ENCODE measurements at regions of chr1 and their contacts with region 1.

Region 1: DNA sequence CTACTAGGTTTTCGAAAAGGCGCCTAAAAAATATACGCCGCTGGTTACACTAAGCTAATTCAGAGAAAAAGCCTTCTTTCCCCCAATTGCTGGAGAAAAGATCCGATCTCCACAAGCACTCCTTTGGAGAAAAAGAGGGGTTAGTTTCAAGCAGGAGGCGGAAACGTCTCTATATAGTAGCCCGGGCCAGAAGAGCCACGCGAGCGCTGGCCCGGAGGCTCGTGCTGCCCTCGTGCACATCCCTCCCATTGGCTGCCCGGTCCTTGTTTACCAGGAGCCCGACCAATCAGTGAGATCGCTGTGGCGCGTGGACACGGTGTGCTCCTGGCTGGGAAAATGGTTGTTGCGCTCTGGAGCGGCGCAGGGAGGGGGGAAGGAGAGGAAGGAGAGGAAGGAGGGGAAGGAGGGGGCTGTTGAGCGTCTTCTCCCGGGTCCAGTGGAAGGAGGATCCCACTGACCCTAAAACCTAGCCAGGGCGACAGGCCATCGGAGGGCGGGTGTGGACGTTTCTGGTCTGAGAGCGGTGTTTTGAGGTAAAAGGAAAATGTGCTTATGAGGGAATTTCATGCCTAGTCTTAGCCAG is at the start of gene TXNIP:
- DNase-seq: peak; percentile 97 to 99
- H3K4me3 ChIP-seq: peak within 1 kb of the TSS; percentile 79 to 88
- H3K27ac ChIP-seq: peak within 1 kb of the TSS; percentile 89 to 95
- H3K4me1 ChIP-seq: peaks cover 3 to 37% of the 10 kb centered on the region in 2 donors
- H3K27me3 ChIP-seq: no peaks in the 10 kb centered on the region
- CTCF ChIP-seq: no peak
- total RNA-seq, gene TXNIP: 877 TPM

Region 2: GRCh38 chr1:145963995-145964901 is 32.3 kb before region 1 on chr1 and contains the starts of genes ANKRD34A and POLR3GL:
- intact Hi-C with region 1: loop called (anchors 5 kb)
- DNase-seq: peak; percentile 94 to 99
- H3K4me3 ChIP-seq: peak within 1 kb of the TSS; percentile 65 to 92
- H3K27ac ChIP-seq: peak within 1 kb of the TSS; percentile 96 to 97
- H3K4me1 ChIP-seq: peaks cover 17 to 36% of the 10 kb centered on the region in 2 donors
- H3K27me3 ChIP-seq: no peaks in the 10 kb centered on the region
- CTCF ChIP-seq: no peak
- total RNA-seq, gene ANKRD34A: 13.6 TPM
- total RNA-seq, gene POLR3GL: 22.9 TPM

Region 3: DNA sequence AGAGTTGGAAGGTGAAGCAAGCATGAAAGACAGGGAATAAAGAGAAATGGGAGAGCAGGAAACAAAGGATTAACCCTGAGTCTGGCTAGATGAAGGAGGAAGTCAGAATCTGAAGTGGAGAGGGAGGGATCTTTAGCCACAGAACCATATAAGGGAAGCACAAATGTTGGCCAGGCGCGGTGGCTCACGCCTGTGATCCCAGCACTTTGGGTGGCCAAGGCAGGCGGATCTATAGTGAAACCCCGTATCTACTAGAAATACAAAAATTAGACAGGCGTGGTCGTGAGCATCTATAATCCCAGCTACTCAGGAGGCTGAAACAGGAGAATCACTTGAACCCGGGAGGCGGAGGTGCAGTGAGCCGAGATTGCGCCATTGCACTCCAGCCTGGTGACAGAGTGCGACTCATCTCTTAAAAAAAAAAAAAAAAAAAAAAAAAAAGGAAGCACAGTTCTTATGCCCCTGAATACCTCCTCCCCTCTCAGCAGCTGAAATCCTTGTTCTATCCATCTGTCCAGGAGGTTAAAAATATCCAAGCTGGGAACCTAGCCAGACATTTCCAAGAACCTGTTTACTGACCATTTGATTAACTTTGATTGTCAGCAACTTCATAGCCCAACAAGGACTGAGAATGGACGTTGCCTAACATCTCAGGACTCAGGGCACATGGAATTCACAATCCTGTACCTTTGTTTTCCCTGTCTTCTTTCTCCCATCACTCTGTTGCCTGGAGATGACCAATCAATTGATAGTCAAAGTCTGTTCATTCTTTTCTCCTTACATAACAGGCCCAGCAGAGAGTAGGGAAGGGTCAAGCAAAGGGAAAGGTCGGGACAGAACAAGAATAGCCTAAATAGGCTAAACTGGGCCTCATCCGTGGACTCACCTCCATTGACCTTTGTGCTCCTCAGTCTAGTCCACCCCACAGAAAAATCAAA is 10.8 kb before region 1 on chr1:
- intact Hi-C with region 1: loop called (anchors 1 kb)
- DNase-seq: peak in 1 of 2 donors; percentile 70
- H3K4me3 ChIP-seq: peak overlapping the region; percentile 12 to 19
- H3K27ac ChIP-seq: peak overlapping the region; percentile 90 to 98
- H3K4me1 ChIP-seq: peaks cover 21 to 49% of the 10 kb centered on the region in 2 donors
- H3K27me3 ChIP-seq: no peaks in the 10 kb centered on the region
- CTCF ChIP-seq: no peak

Region 4: DNA sequence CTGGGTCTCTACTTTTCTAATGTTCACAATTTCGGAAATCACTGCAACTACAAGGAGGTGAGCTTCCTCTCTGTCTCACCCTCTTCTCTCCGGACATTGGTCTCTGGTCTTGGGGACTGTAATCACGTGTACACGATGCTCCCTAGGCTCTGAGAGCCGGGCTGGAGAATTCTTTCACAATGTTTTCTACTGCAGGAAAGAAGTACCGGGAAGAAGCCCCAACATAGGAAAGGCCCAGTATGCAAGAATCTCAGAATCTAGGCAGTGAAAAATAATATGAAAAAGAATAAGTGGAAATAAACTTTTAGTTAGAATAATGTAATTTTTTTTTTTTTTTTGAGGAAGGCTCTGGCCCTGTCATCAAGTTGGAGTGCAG is 38.5 kb after region 1 on chr1:
- intact Hi-C with region 1: loop called (anchors 2 kb)
- DNase-seq: no peak
- H3K4me3 ChIP-seq: peak overlapping the region in 1 of 2 donors; percentile 76
- H3K27ac ChIP-seq: peak overlapping the region; percentile 37 to 62
- H3K4me1 ChIP-seq: peaks cover 4 to 8% of the 10 kb centered on the region in 2 donors
- H3K27me3 ChIP-seq: no peaks in the 10 kb centered on the region
- CTCF ChIP-seq: no peak

Measured in ascending aorta (tissue), 2 donors.